ENCODE measurements at regions of chr11 and their contacts with region 1.

Region 1: DNA sequence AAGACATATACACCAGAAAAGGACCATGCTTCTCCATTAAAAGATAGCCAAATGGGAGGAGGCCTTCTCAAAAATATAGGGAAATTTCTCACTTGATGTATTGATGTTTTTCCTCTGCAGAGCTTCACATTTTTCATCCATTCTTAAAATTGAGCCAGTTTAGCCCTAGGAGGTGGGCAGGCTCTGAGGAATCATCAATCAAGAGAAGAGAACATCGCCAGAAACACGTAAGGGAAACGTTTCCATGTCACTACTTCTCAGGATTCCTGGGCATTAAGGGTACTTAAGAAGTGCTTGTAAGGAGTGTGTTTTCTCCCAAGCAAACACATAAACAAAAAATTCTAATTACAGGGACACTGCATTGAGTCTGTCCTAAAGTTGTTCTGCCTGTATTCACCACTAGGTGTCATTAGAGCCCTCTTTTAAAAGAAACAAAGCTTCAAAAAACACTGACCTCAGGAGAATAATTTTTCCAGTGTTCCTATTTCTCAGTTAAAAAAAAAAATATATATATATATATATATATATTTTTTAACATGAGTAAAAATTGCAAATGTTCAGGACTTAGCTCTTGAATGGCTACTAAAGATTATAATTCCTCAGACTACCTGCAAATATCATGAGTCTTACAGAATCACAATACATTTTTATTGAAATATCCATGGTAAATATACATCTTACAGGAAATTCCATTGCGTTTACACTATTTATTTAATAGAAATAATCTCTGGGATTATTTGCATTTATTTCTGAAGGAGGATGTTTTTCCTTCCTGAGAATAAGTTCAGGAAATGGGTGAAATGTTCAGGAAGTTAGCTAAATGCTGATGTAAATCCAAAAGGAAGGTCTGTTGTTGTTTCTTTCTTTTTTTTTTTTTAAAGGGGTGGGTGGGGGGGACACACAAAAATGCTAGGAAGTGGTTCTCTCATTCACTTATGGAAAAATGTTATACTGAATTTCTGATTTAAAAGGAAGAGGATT is 16.0 kb downstream of the FZD4 start:
- DNase-seq: peak; percentile 85
- H3K4me3 ChIP-seq: peak overlapping the region in 1 of 3 experiments; percentile 25
- H3K27ac ChIP-seq: peak overlapping the region; percentile 89
- H3K4me1 ChIP-seq: peaks cover 73% of the 10 kb centered on the region
- H3K27me3 ChIP-seq: no peaks in the 10 kb centered on the region
- CTCF ChIP-seq: peak; percentile 41 to 49
- POLR2A ChIP-seq: peak; percentile 1

Region 2: DNA sequence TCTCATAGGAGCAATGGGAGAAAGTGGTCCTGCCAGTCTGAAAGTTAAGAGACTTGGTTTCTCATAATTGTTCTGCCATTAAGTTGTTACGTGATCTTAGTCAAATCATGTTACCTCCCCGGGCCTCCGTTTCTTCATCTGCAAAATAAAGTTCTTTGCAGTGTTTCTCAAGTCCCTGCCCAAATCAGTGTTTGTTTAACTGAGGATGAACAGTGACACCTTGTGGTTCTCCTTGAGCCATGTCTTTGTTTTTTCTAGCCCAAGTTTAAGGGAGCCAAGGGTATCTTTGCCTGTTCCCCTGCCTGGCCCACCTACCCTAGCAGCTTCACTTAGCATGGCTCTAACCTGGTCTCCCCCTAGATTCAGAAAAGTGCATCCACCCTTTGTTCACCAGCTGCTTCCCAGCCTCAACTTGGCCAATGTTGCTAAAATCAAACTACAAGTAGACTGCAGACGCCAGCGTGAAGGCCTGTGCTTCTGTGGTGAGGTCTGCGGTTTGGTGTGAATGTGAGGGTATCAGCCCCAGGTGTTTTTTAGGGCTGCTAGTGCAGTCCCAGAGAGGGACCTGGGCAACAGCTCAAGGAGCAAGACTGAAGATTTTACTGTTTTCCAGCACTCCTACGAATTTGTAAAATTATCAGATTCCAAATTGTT is 19.5 kb before region 1 on chr11:
- CTCF ChIA-PET with region 1: interaction called, 17 read pairs
- POLR2A ChIA-PET with region 1: no interaction called
- dilution Hi-C with region 1: no loop called
- intact Hi-C with region 1: loop called (anchors 1 kb)
- DNase-seq: peak; percentile 88
- H3K4me3 ChIP-seq: no peak overlapping the region
- H3K27ac ChIP-seq: peak overlapping the region; percentile 100
- H3K4me1 ChIP-seq: peaks cover 48% of the 10 kb centered on the region
- H3K27me3 ChIP-seq: no peaks in the 10 kb centered on the region
- CTCF ChIP-seq: peak; percentile 60
- POLR2A ChIP-seq: no peak

Region 3: DNA sequence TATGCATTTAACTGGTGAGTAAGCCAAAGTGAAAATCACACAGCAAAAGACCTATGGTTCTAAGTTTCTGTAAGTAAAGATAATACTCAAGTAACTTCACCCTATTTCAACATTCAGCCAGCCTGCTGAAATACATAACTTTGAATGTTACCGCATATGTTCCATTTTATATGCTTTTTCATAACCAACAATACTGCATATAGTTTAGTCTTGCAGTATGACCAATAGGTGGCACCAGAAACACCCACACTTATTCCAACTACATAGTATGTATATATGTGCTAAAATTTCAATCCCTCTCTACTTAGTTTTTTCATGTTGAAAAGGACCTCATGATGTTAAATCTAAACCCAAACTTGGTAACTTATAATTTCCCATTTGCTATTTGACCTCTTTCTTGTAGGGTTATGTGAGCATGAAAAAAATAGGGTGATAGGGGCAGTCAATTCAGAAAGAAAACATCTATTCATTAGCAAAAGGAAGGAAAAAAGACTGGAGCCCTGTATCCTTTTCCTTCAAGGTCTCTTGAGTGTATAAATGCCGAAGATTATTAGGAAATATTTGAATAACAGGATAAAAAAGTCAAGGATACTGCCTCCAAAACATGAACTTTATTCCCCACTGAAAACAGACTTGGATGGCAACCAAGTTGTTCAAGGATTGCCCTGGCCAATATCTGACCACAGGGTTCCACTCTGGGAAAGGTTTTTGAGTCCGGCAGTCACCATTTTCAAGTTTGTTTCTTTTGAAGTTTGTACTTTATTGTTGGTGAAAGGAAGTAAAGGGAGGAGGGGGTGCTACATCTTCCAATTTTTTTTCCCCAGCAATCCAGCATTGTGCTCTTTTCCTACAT is 39.8 kb after region 1 on chr11:
- CTCF ChIA-PET with region 1: interaction called, 5 read pairs
- POLR2A ChIA-PET with region 1: no interaction called
- dilution Hi-C with region 1: no loop called
- intact Hi-C with region 1: loop called (anchors 1 kb)
- DNase-seq: peak; percentile 82
- H3K4me3 ChIP-seq: no peak overlapping the region
- H3K27ac ChIP-seq: no peak overlapping the region
- H3K4me1 ChIP-seq: peaks cover 5% of the 10 kb centered on the region
- H3K27me3 ChIP-seq: no peaks in the 10 kb centered on the region
- CTCF ChIP-seq: peak; percentile 35 to 52
- POLR2A ChIP-seq: no peak

Region 4: DNA sequence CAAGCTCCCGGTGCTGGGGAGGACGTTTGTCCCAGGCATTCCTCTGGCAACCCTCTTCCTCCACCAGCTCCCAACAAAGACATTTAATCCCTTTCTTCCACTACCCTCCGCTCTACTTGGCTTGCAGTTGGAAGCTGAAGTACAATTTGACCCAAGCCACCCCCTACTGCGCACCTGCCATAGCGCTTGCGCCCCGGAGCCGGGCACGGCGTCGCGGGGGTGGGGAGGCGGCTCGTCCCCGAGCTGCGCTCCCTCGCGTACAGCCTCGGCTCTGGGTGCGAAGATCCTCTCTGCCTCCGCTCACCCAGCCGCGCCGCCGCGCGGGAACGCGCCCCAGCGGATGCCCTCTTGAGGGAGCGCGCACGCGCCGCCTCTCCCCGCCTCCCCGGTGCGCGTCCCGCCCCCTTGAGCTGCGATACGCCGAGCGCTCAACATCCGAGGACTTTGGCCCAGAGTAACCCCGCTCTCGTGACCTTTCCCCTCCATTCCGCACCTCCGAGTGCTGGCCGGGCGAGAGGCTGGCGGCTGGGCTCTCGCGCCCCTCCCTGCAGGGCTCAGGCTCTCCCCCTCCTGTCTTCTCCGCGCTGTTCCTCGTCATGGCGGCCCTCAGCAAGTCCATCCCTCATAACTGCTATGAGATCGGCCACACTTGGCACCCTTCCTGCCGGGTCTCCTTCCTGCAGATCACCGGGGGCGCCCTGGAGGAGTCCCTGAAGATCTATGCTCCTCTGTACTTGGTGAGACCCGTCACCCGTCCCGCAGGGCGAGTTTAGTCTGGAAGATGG is 98.5 kb after region 1 on chr11 and contains the start of gene TMEM135:
- CTCF ChIA-PET with region 1: interaction called, 4 read pairs
- POLR2A ChIA-PET with region 1: no interaction called
- dilution Hi-C with region 1: no loop called
- intact Hi-C with region 1: loop called (anchors 1 kb)
- DNase-seq: peak; percentile 94
- H3K4me3 ChIP-seq: peak within 1 kb of the TSS; percentile 32 to 70 (median 67)
- H3K27ac ChIP-seq: peak within 1 kb of the TSS; percentile 1
- H3K4me1 ChIP-seq: peaks cover 12% of the 10 kb centered on the region
- H3K27me3 ChIP-seq: no peaks in the 10 kb centered on the region
- CTCF ChIP-seq: no peak
- POLR2A ChIP-seq: peak; percentile 93
- total RNA-seq, gene TMEM135: 33.2 and 36.8 TPM in 2 replicates

Region 5: GRCh38 chr11:87193756-87194470 is 254.7 kb after region 1 on chr11:
- CTCF ChIA-PET with region 1: no interaction called
- POLR2A ChIA-PET with region 1: no interaction called
- dilution Hi-C with region 1: no loop called
- intact Hi-C with region 1: no loop called
- DNase-seq: no peak
- H3K4me3 ChIP-seq: no peak overlapping the region
- H3K27ac ChIP-seq: no peak overlapping the region
- H3K4me1 ChIP-seq: no peaks in the 10 kb centered on the region
- H3K27me3 ChIP-seq: no peaks in the 10 kb centered on the region
- CTCF ChIP-seq: no peak
- POLR2A ChIP-seq: no peak

Region 6: DNA sequence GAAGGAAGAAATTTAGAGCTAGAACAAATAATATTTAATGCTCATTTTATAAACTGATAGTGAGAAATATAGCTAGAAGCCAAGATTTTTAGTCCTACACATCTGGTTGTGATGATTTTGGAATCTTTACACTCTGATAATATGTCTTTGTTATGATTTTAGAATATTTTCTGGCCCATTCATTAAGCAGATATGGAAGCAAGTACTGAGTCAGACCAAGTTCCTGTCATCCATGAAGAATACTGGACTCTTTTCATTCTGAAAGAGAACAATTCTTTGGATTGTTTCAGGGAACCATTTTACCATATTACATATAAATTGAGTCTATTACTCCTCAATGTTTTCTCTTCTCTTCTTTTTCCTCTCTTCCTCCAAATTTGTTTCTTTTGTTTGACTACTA is 325.9 kb after region 1 on chr11:
- CTCF ChIA-PET with region 1: interaction called, 13 read pairs
- POLR2A ChIA-PET with region 1: no interaction called
- dilution Hi-C with region 1: no loop called
- intact Hi-C with region 1: no loop called
- DNase-seq: peak; percentile 52
- H3K4me3 ChIP-seq: no peak overlapping the region
- H3K27ac ChIP-seq: peak overlapping the region; percentile 13
- H3K4me1 ChIP-seq: peaks cover 39% of the 10 kb centered on the region
- H3K27me3 ChIP-seq: no peaks in the 10 kb centered on the region
- CTCF ChIP-seq: no peak
- POLR2A ChIP-seq: no peak

Region 7: DNA sequence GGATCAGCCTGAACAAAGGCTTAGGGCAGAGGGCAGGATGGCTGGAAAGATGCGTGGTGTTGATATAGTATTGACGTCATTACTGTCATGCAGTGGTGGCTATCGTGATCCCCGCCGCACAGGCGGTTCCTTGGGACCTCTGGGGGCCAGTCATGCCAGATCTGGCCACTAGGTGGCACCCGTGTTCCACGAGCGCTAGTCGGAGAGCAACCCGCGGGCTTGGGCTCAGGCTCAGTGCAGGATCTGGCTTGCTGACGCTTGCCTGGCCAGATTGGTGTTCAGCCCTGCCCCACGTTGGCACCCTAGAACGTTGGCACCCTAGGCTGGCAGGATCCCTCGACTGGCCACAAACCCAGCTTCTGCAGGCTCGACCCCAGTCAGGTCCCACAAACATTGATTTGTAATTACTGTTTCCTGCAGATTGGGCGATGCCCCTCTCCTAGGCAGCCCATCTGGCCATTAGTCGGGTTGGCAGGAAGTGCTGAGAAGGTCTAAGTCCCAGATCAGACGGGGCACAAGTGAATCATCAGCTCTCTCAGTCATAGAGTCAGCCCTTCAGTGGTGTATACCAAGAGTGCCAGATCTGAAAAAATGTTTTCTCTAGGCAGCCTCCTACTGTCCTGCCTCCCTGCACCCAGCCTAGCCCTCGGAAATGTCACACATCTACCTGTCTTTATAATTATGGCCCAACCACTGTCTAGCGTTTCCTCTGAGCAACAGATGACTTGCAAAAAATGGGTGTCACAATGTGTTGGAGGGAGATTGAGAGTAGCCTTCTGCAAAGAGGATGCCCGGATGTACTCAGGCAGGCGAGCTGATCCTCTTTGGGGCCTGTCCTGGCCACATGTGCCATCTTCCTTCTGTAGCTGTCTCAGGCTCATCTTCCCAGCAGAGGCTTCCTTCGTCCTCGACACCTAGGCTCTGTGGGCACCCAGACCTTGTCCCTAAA is 413.8 kb after region 1 on chr11:
- CTCF ChIA-PET with region 1: interaction called, 20 read pairs
- POLR2A ChIA-PET with region 1: no interaction called
- dilution Hi-C with region 1: no loop called
- intact Hi-C with region 1: loop called (anchors 1 kb)
- DNase-seq: peak; percentile 89
- H3K4me3 ChIP-seq: no peak overlapping the region
- H3K27ac ChIP-seq: peak overlapping the region; percentile 62
- H3K4me1 ChIP-seq: peaks cover 18% of the 10 kb centered on the region
- H3K27me3 ChIP-seq: no peaks in the 10 kb centered on the region
- CTCF ChIP-seq: peak; percentile 96 to 97
- POLR2A ChIP-seq: no peak